PC-9 (cell line): ENCODE measurements at regions of chr11 and their contacts with region 1.

Region 1: DNA sequence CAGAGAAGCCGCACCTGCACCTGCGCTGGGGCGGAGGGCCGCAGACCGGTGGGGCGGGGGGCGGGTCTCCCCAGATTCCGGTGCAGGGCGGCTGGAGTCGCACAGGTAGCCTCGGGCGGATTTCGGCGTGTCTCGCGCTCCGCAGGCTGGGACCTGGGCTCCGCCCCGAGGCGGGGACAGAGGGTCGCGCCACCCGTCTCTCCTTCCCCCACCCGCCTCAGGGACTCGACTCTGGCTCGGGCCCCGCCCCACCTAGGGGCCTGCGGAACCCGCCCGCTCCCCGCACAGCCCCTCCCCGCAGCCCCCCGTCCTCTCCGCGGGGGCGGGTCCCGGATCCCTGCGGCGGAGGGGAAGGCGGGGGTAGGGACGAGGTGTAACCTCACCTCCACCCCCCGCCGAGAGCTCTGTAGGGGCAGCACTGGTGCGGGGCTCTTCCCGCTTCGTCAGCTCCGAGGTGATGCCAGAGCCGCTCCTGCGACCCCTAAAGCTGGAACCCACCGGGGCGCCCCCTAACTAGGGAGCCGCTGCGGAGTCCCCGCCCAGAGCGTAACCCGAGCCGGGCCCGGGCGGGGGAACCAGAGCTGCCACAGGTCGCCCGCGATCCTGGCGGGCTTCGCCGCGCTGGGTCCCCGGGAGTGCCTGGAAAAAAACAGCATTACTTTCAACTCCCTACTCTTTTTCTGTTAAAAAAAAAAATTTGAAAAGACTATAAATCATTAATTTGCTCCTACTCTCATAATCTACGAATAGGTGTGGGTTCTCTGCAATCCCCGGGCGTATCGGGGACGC is at the start of gene SLC29A2:
- DNase-seq: peak; percentile 93 to 100
- H3K4me3 ChIP-seq: peak within 1 kb of the TSS; percentile 95
- H3K27ac ChIP-seq: peak within 1 kb of the TSS; percentile 80
- H3K4me1 ChIP-seq: peaks cover 24% of the 10 kb centered on the region
- H3K27me3 ChIP-seq: no peaks in the 10 kb centered on the region
- CTCF ChIP-seq: no peak
- total RNA-seq, gene SLC29A2: 28.9 and 36.1 TPM in 2 replicates

Region 2: GRCh38 chr11:66119348-66120133 is 252.3 kb before region 1 on chr11:
- CTCF ChIA-PET with region 1: interaction called, 11 read pairs
- POLR2A ChIA-PET with region 1: interaction called, 3 read pairs
- intact Hi-C with region 1: no loop called
- DNase-seq: peak; percentile 56 to 81
- H3K4me3 ChIP-seq: 0 out of 2 replicates have a peak overlapping the region, but pooled peaks have one; percentile 15
- H3K27ac ChIP-seq: peak overlapping the region; percentile 86
- H3K4me1 ChIP-seq: peaks cover 41% of the 10 kb centered on the region
- H3K27me3 ChIP-seq: no peaks in the 10 kb centered on the region
- CTCF ChIP-seq: no peak

Region 3: DNA sequence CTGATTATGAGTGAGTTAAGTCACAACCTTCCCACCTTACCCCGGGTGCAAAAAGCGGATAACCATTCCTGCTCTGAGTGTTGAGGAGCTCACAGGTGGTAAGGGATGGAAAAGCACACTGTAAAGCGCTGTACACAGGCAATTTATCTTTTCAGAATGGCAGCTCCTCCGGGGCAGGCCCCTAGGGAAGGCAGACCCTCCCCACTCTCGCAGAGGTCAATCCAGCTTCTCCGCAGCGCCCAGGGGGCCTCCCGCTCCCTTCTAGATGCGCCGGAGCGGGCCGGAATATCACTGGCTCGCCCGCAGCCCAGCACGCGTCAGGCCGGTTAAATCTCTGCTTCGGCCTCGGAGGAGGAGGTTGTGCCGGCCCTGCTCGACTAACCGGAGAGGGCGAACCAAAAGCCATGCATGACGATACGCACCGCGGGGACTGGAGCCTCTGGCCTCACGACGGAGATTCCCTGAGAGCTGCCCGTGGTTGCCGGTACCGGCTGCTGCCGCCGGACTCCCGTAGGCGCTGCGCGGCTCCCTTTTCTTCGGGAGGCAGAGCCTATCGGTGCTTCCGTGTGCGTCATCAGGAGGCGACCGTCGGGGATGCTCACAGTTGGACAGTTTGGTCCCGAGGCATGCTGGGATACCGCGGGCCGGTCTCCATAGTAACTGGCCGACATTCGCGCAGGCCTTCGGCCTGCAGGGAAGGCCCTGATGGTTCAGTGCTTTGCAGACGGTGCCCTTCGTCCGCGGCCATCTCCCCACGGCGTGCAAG is 27.1 kb before region 1 on chr11 and contains the start of gene BRMS1:
- CTCF ChIA-PET with region 1: interaction called, 15 read pairs
- POLR2A ChIA-PET with region 1: interaction called, 5 read pairs
- intact Hi-C with region 1: loop called (anchors 1 kb)
- DNase-seq: peak; percentile 94
- H3K4me3 ChIP-seq: peak within 1 kb of the TSS; percentile 100
- H3K27ac ChIP-seq: peak within 1 kb of the TSS; percentile 11; the same call in 1 of the 2 replicates
- H3K4me1 ChIP-seq: peaks cover 34% of the 10 kb centered on the region
- H3K27me3 ChIP-seq: no peaks in the 10 kb centered on the region
- CTCF ChIP-seq: no peak
- total RNA-seq, gene BRMS1: 43.2 and 54.3 TPM in 2 replicates

Region 4: GRCh38 chr11:66359662-66360087 is 12.1 kb before region 1 on chr11:
- CTCF ChIA-PET with region 1: interaction called, 10 read pairs
- POLR2A ChIA-PET with region 1: interaction called, 5 read pairs
- intact Hi-C with region 1: no loop called
- DNase-seq: no peak
- H3K4me3 ChIP-seq: no peak overlapping the region
- H3K27ac ChIP-seq: no peak overlapping the region
- H3K4me1 ChIP-seq: no peaks in the 10 kb centered on the region
- H3K27me3 ChIP-seq: no peaks in the 10 kb centered on the region
- CTCF ChIP-seq: no peak

Region 5: DNA sequence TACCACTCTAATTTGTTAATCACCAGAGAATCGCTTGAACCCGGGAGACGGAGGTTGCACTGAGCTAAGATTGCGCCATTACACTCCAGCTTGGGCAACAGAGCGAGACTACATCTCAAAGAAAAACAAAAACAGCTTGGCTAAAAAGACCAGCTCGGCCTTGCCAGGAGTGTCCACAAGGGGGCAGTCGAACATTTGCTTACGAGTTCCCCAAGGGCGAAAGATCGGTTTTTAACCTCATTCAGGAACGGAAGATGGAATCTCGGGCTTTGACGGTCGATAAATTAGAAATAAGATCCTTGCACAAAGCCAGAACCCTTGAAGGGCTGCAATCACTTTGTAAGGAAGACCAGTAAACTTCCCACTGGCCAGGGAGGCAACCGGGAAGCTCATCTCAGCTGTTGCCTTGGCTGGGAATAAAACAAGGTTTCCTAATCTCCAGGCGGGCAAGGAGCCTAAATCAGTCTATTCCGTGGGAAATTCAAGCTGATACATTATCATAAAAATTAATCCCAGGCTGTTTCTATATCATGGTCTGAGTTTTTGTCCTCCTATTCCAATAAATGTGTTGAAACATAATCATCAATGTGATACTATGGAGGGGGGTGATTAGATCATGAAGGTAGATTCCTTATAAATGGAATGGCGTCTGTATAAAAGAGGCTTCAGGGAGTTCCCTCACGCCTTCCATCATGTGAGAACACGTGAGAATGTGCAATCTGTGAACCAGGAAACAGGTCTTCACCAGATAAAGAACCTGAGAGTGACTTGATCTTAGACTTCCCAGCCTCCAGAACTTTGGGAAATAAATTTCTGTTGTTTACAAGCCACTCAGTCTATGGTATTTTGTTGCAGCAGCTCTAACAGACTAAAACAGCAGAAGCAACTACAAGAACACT is 14.6 kb after region 1 on chr11:
- CTCF ChIA-PET with region 1: interaction called, 15 read pairs
- POLR2A ChIA-PET with region 1: interaction called, 6 read pairs
- intact Hi-C with region 1: loop called (anchors 2 kb)
- DNase-seq: peak; percentile 79 to 82
- H3K4me3 ChIP-seq: peak overlapping the region; percentile 37; the same call in 1 of the 2 replicates
- H3K27ac ChIP-seq: no peak overlapping the region
- H3K4me1 ChIP-seq: no peaks in the 10 kb centered on the region
- H3K27me3 ChIP-seq: peaks cover 6% of the 10 kb centered on the region; the same call in 1 of the 2 replicates
- CTCF ChIP-seq: peak; percentile 97